ENCODE measurements at regions of chr5 and their contacts with region 1.

Region 1: GRCh38 chr5:164980480-164980879 is 1475.1 kb downstream of the MAT2B start:
- DNase-seq: no peak
- ATAC-seq: no peak
- H3K4me3 ChIP-seq: no peak overlapping the region
- H3K27ac ChIP-seq: no peak overlapping the region
- H3K4me1 ChIP-seq: no peaks in the 10 kb centered on the region
- H3K27me3 ChIP-seq: no peaks in the 10 kb centered on the region
- CTCF ChIP-seq: no peak
- POLR2A ChIP-seq: no peak
- RAD21 ChIP-seq: no peak

Region 2: GRCh38 chr5:164962329-164962961 is 18.0 kb before region 1 on chr5:
- CTCF ChIA-PET with region 1: no interaction called
- POLR2A ChIA-PET with region 1: no interaction called
- dilution Hi-C with region 1: no loop called
- in situ Hi-C with region 1: no loop called
- intact Hi-C with region 1: loop called (anchors 1 kb)
- DNase-seq: no peak
- ATAC-seq: peak; percentile 74
- H3K4me3 ChIP-seq: no peak overlapping the region
- H3K27ac ChIP-seq: no peak overlapping the region
- H3K4me1 ChIP-seq: no peaks in the 10 kb centered on the region
- H3K27me3 ChIP-seq: no peaks in the 10 kb centered on the region
- CTCF ChIP-seq: no peak
- POLR2A ChIP-seq: no peak
- RAD21 ChIP-seq: no peak

Measured in IMR-90 (cell line).